ENCODE measurements at regions of chr16 and their contacts with region 1.

Region 1: GRCh38 chr16:79721270-79721669 is 120.7 kb upstream of the MAF start:
- DNase-seq: peak; percentile 30
- H3K4me3 ChIP-seq: no peak overlapping the region
- H3K27ac ChIP-seq: peak overlapping the region; percentile 7 to 43
- H3K4me1 ChIP-seq: peaks cover 13% of the 10 kb centered on the region
- H3K27me3 ChIP-seq: no peaks in the 10 kb centered on the region
- CTCF ChIP-seq: no peak
- POLR2A ChIP-seq: no peak

Region 2: DNA sequence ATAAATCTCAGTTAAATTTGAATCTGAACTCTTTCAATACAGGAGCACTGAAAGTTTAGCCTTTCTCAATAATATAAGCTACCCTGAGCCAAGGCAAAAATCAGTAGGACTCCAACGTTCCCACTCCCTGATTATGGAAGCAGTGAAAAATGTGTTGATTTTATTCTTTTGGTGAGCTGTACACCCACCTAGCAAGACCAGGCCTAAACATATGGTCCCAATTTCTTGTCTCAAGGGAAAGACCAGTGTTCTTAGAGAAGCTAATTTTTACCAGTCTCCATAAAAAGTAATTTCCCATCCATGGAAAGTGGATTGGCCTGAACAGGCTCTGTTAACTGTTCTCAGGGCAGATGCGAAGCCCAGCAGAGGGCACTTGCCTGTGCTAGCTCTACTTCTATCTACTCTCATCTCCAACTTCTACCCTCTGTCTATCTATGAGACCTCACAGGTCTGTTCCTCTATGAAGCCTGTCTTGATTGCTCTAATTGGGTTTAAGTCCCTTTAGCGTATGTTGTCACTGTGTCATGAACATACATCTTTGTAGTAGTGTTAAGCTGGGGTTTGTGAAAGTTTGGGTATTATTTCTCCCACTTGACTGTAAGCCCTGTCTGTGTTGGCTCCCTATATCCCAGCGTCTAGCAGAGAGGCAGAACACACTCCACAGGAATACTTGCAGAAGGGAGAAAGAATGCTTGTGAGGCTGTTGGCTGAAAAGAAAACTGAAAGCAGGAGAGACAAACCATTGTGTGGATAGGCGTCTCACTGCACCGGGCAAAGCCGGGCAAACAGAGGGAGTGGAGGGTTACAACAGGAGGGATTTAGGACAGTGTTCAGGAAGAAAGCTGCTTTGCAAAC is 46.4 kb after region 1 on chr16:
- intact Hi-C with region 1: loop called (anchors 5 kb)
- DNase-seq: peak; percentile 47
- H3K4me3 ChIP-seq: peak overlapping the region; percentile 23
- H3K27ac ChIP-seq: peak overlapping the region; percentile 85 to 89
- H3K4me1 ChIP-seq: peaks cover 25% of the 10 kb centered on the region
- H3K27me3 ChIP-seq: no peaks in the 10 kb centered on the region
- CTCF ChIP-seq: peak in 1 of 4 experiments; percentile 36
- POLR2A ChIP-seq: peak; percentile 9